Left lung (tissue), 14 donors: ENCODE measurements at regions of chr3 and their contacts with region 1.

Region 1: GRCh38 chr3:138118612-138119422 is 3.4 kb upstream of the DZIP1L start:
- DNase-seq: peak in 3 of 4 donors; percentile 39 to 71 (median 69)
- ATAC-seq: peak; percentile 74
- H3K4me3 ChIP-seq: no peak overlapping the region
- H3K27ac ChIP-seq: no peak overlapping the region
- H3K4me1 ChIP-seq: peaks cover 6 to 18% of the 10 kb centered on the region in 2 donors
- H3K27me3 ChIP-seq: no peaks in the 10 kb centered on the region
- CTCF ChIP-seq: peak; percentile 78

Region 2: DNA sequence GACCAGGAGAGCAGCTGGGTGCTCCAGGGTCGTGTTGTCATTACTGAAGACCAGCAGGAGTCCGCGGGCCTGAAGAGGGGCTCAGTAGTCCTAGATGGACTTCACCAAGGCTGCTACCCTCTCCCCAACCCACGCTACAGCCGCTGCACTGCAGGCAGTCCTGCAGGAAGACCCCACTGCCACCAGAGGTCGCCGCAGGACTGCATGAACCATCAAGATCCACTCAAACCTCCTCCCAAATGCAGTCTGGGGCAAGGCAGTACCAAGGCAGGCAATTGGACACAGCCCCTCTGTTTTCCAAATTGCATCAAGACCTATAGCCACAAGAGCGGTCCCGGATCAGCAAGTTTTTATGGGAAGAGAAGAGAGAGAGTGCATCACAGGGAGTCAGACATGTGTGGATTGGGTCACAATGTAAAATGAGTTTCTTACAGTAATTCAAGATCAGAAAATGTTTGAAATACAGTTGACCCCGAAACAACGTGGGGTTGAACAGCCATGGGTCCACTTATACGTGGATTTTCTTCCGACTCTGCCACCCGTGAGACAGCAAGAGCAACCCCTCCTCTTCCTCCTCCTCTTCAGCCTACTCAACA is 50.1 kb before region 1 on chr3:
- intact Hi-C with region 1: loop called in 1 of 2 experiments (anchors 5 kb)
- DNase-seq: peak; percentile 57 to 93 (median 81)
- ATAC-seq: peak; percentile 98
- H3K4me3 ChIP-seq: no peak overlapping the region
- H3K27ac ChIP-seq: no peak overlapping the region
- H3K4me1 ChIP-seq: no peaks in the 10 kb centered on the region
- H3K27me3 ChIP-seq: no peaks in the 10 kb centered on the region
- CTCF ChIP-seq: peak; percentile 94 to 99